ENCODE measurements at regions of chr14 and their contacts with region 1.

Region 1: DNA sequence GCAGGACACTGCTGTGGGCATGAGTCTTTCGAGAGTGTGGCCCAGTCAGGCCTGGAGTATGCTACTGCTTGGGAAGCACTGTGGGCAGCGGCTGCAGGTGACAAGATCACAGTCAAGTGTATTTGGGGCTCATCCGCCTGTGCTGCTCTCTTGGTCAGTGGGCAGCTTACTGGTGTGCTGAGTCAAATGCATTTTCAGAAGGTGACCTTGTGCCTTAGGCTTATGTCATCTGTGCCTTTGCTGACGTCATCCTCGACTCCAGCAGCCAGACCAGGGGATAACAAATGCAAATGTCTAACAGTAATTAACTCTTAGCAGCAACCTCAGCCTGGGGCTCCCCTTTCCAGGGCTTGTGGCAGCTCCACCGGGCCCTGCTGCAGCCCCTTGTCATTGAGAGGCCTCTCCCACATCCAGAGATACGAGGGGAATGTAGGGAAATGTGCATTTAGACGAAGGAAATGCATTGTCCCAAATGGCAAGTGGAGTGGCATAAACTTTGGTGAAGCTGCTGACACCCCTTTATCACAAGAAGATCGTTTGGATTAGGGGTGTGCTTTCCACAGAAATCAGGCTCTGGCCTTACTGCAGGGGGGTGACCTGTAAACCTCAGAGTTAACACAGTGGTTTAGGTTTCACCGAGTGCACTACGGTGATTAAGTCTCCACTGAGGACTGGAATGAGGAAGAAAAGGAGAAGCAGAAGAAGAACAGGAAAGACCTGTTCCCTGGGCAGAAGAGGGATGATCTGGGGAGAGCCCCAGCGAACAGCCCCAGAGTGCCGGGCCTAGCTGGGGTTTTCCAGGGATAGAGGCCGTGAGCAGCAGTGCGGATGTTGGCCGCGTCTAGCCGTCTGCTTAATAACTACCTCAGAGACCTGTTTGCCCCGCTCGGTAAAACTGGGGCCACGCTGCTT is 39.7 kb downstream of the PSMA6 start:
- DNase-seq: no peak
- H3K4me3 Mint-ChIP-seq: peak overlapping the region; percentile 79
- H3K27ac Mint-ChIP-seq: peak overlapping the region; percentile 91
- H3K4me1 Mint-ChIP-seq: peaks cover 30% of the 10 kb centered on the region
- H3K27me3 Mint-ChIP-seq: no peaks in the 10 kb centered on the region

Region 2: GRCh38 chr14:34843011-34843554 is 488.8 kb before region 1 on chr14:
- intact Hi-C with region 1: no loop called
- DNase-seq: peak; percentile 59
- H3K4me3 Mint-ChIP-seq: peak overlapping the region; percentile 15
- H3K27ac Mint-ChIP-seq: peak overlapping the region; percentile 69
- H3K4me1 Mint-ChIP-seq: peaks cover 9% of the 10 kb centered on the region
- H3K27me3 Mint-ChIP-seq: no peaks in the 10 kb centered on the region

Region 3: GRCh38 chr14:34993426-34993825 is 338.4 kb before region 1 on chr14:
- intact Hi-C with region 1: no loop called
- DNase-seq: no peak
- H3K4me3 Mint-ChIP-seq: no peak overlapping the region
- H3K27ac Mint-ChIP-seq: no peak overlapping the region
- H3K4me1 Mint-ChIP-seq: peaks cover 12% of the 10 kb centered on the region
- H3K27me3 Mint-ChIP-seq: no peaks in the 10 kb centered on the region

Region 4: GRCh38 chr14:35088514-35088913 is 243.3 kb before region 1 on chr14:
- intact Hi-C with region 1: no loop called
- DNase-seq: no peak
- H3K4me3 Mint-ChIP-seq: no peak overlapping the region
- H3K27ac Mint-ChIP-seq: peak overlapping the region; percentile 5
- H3K4me1 Mint-ChIP-seq: no peaks in the 10 kb centered on the region
- H3K27me3 Mint-ChIP-seq: no peaks in the 10 kb centered on the region

Region 5: DNA sequence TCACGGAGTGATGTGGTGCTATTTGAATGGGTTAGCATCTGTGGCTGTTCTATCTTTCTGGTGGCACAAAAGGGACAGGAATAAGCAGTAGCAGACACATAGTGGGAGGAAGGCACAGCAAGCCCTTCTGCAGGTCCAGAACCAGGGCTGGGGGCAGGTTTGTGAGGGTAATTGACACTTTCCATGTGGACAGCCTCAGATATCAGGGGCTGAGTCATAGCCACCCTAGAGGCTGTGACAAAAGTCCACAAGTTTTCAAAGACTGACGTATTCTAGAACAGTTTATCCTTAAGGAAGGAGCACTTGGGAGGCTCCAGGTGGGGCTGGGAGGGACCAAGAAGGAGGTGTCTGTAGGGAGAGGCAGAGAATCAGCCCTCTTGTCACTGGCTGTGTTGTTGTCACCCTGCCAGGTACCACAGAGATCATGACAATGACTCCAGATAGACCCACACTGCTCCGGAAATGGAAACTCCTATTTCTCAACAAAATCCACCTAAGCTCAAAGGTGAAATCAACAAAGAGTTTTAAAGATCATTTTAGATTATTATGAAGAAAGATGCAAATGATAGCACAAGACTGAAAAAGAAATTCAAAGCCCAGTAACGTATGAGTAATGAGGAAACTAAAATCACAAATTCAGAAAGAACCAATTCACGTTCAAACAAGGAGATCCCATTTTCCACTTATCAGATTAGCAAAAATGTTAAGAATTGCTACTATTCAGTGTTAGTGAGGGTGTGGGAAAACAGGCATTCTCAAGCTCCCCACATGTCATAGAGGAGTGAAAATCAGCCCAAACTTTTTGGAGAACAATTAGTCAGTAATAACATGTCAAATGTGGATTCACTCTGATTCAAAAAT is 24.4 kb after region 1 on chr14:
- intact Hi-C with region 1: loop called (anchors 1 kb)
- DNase-seq: peak; percentile 64
- H3K4me3 Mint-ChIP-seq: peak overlapping the region; percentile 9
- H3K27ac Mint-ChIP-seq: peak overlapping the region; percentile 87
- H3K4me1 Mint-ChIP-seq: peaks cover 26% of the 10 kb centered on the region
- H3K27me3 Mint-ChIP-seq: no peaks in the 10 kb centered on the region

Measured in activated CD4-positive, alpha-beta T cell treated with anti-CD3 and anti-CD28 coated beads, Interleukin-2, amount 10 ng/mL, durations not matched to agents 24 days and 14 days (primary cell).